Sigmoid colon (tissue), 7 donors: ENCODE measurements at regions of chr12 and their contacts with region 1.

Region 1: DNA sequence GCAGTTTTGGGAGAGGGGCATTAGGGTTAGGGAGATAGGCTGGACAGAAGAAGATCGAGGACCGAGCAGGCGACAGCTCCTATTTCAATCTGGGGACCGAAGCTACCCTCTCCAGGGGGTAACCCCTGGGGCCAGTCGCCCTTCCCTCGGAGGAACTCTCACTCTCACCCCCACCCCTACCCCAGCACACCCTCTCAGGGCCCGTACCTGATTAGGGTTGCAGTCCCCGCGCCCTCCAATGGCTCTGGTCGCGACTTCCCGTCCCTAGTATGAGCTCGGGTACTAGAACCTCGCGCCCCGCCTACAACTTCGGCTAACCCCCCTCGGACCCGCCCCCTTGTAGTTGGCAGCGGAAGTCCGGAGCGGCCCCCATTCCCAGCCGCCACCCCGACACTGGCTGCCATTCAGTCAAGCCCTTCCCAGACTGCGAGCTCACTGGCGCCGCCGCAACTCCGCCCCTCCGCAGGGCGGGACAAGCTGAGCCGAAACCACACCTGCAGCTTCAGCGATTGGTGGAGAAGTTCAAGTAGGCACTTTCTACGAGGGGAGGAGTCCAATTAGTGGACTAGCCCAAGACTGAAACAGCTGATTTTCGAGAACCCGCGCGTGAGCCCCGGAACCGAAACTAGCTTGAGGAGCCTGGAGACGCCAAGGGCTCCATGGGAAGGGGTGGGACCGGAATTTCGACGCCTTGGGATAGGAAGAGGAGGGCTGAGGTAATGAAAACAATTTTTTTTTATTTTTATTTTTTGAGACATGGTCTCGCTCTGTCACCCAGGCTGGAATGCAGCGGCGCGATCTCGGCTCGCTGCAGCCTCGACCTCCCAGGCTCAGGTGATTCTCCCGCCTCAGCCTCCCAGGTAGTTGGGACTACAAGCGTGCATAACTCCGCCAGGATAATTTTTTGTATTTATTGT is at the start of gene STAT2:
- DNase-seq: peak; percentile 99
- H3K4me3 ChIP-seq: peak within 1 kb of the TSS; percentile 64 to 91 (median 78)
- H3K27ac ChIP-seq: peak within 1 kb of the TSS; percentile 88 to 92 (median 90)
- H3K4me1 ChIP-seq: peaks cover 0 to 23% (median 18%) of the 10 kb centered on the region in 4 donors
- H3K27me3 ChIP-seq: no peaks in the 10 kb centered on the region
- CTCF ChIP-seq: peak in 1 of 4 experiments; percentile 13
- EP300 ChIP-seq: peak in 2 of 4 donors; percentile 23 to 57
- POLR2A ChIP-seq: peak; percentile 61 to 82
- total RNA-seq, gene STAT2: 73.6 to 160 (median 94.6) TPM

Region 2: DNA sequence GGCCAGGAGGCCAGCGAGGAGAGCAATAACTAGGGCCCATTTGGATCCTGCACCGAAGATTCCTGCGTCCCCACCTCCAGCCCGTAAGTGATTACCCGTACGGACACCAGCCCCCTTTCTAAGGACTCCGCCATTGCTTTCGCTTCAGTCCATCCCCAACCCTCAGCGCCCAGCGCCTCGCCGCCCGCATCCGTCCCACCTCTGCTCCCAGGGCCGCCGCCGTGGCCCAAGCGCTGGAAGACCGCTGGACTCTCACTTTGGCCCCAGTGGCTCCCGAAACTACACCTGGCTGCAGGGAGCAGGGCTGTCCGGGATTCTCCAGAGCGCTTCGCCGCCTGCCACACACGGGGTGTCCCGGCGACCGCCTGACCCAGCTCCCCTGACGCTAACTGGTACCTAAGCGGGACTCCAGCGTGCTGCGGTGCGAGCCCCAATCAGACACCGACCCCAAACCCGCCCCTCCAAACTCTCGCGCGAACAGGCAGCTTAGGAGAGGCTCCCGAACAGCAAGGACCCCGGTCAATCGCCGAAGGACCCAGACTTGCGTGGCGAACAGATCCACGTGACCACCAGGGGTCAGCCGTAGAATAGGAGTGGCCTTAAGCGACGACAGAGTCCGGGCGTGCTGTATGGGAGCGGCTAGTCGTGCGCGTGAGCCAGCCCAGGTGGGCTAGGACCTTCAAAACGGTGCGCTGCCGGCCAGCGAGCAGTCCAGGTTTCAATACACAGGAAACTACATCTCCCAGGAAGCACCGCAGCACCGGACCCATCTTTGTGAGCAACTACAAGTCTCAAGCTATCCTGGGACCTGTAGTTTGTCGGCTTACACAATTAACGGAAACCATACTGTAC is 44.3 kb before region 1 on chr12 and contains the start of gene CNPY2:
- intact Hi-C with region 1: no loop called
- DNase-seq: peak; percentile 98
- H3K4me3 ChIP-seq: peak within 1 kb of the TSS; percentile 87 to 98 (median 90)
- H3K27ac ChIP-seq: peak within 1 kb of the TSS; percentile 93 to 95 (median 94)
- H3K4me1 ChIP-seq: peaks cover 0 to 22% (median 18%) of the 10 kb centered on the region in 4 donors
- H3K27me3 ChIP-seq: no peaks in the 10 kb centered on the region
- CTCF ChIP-seq: no peak
- EP300 ChIP-seq: no peak
- POLR2A ChIP-seq: peak; percentile 67 to 68
- total RNA-seq, gene CNPY2: 48.7 to 77.1 (median 67.9) TPM

Region 3: GRCh38 chr12:56448860-56449621 is 88.9 kb after region 1 on chr12 and contains the start of gene TIMELESS:
- intact Hi-C with region 1: loop called (anchors 1 kb)
- DNase-seq: peak; percentile 95
- H3K4me3 ChIP-seq: peak within 1 kb of the TSS; percentile 54 to 75 (median 63)
- H3K27ac ChIP-seq: peak within 1 kb of the TSS; percentile 89 to 92 (median 90)
- H3K4me1 ChIP-seq: peaks cover 0 to 13% (median 3%) of the 10 kb centered on the region in 4 donors
- H3K27me3 ChIP-seq: no peaks in the 10 kb centered on the region
- CTCF ChIP-seq: peak in 2 of 4 experiments; percentile 5 to 23
- EP300 ChIP-seq: no peak
- POLR2A ChIP-seq: peak; percentile 75 to 82
- total RNA-seq, gene TIMELESS: 2.0 to 5.2 (median 3.5) TPM